Vagina (tissue), 2 donors: ENCODE measurements at regions of chr2 and their contacts with region 1.

Region 1: GRCh38 chr2:230541934-230542380 is 126.0 kb downstream of the SP100 start:
- DNase-seq: no peak
- H3K4me3 ChIP-seq: no peak overlapping the region
- H3K27ac ChIP-seq: no peak overlapping the region
- H3K4me1 ChIP-seq: no peaks in the 10 kb centered on the region
- H3K27me3 ChIP-seq: no peaks in the 10 kb centered on the region
- CTCF ChIP-seq: no peak
- POLR2A ChIP-seq: no peak

Region 2: GRCh38 chr2:228768818-228769217 is 1773.1 kb before region 1 on chr2:
- intact Hi-C with region 1: loop called (anchors 5 kb)
- DNase-seq: no peak
- H3K4me3 ChIP-seq: no peak overlapping the region
- H3K27ac ChIP-seq: peak overlapping the region; percentile 42
- H3K4me1 ChIP-seq: peaks cover 16% of the 10 kb centered on the region
- H3K27me3 ChIP-seq: no peaks in the 10 kb centered on the region
- CTCF ChIP-seq: no peak
- POLR2A ChIP-seq: no peak